HCT116 (cell line): ENCODE measurements at regions of chr2 and their contacts with region 1.

Region 1: GRCh38 chr2:47272031-47272864 is 117.1 kb upstream of the STPG4 start:
- DNase-seq: peak; percentile 26
- ATAC-seq: peak; percentile 88
- H3K4me3 ChIP-seq: peak overlapping the region; percentile 39 to 53
- H3K27ac ChIP-seq: peak overlapping the region; percentile 8; the same call in 1 of the 2 replicates
- H3K4me1 ChIP-seq: peaks cover 8 to 35% of the 10 kb centered on the region in 2 experiments; a peak in 3 of 4 replicates
- H3K27me3 ChIP-seq: no peaks in the 10 kb centered on the region
- CTCF ChIP-seq: peak; percentile 87 to 95 (median 88)
- POLR2A ChIP-seq: no peak
- RAD21 ChIP-seq: peak; percentile 88

Region 2: DNA sequence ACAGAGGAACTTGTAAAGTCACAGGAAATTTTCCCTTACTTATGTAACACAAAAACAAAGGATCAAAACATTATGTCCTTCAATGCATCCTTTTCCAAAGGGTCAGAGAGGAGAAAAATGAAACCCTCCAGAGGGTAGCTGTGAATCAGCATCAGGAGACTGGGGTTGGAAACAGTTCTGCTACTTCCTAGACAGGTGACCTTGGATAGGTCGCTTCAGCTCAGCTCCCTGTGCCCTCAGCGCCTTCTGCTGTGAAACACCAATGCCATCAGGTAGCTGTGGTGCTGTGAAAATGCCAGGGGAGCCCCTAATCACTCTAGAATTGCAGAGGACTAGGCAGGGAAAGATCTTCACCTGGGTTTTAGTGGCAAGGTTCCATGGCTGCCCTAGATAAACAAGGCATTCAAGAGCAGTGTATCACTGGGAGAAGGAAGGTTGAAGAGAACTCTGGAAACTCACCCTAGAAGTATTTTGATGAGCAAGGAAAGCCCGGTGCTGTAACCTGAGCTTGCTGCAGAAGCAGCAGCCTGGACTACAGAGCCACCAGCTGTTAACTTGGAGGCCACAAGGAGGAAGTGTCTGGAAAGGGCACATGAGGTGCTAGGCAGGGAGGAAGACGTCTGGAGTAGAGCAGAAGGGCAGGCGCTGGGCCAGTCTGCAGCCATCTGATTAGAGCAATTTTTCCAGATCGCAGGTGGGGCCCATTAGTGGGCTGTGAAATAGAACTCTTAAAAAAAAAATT is 255.9 kb before region 1 on chr2:
- CTCF ChIA-PET with region 1: no interaction called
- POLR2A ChIA-PET with region 1: no interaction called
- RAD21 ChIA-PET with region 1: no interaction called
- intact Hi-C with region 1: loop called (anchors 5 kb)
- DNase-seq: peak; percentile 60
- ATAC-seq: peak; percentile 92
- H3K4me3 ChIP-seq: peak overlapping the region in 1 of 2 experiments; percentile 7; a peak in 1 of 4 replicates
- H3K27ac ChIP-seq: peak overlapping the region; percentile 66
- H3K4me1 ChIP-seq: peaks cover 23 to 30% of the 10 kb centered on the region in 2 experiments
- H3K27me3 ChIP-seq: no peaks in the 10 kb centered on the region
- CTCF ChIP-seq: peak in 2 of 3 experiments; percentile 19 to 33; a peak in 1 of 6 replicates
- POLR2A ChIP-seq: no peak
- RAD21 ChIP-seq: peak; percentile 73

Region 3: DNA sequence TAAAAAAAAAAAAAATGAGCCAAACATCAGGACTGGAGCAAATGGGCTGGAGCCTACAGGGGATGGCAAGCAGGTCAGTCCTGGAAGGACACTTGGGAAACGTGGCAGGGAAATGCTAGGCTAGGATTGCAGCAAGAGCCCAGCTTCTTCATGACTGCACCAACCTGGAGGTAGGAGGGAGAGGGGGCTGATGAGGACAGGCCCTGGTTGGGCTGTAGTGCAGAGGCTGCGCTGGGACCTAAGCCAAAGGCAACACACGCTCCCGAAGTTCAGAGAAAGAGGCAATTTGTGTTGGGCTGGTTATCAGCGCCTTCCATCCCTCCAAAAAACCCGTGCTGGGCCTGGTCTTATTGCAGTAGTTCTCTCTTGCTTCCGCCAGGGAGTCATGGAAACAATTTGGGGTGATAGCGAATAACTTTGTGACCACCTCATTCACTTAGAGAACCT is 34.9 kb before region 1 on chr2:
- CTCF ChIA-PET with region 1: no interaction called
- POLR2A ChIA-PET with region 1: no interaction called
- RAD21 ChIA-PET with region 1: no interaction called
- intact Hi-C with region 1: no loop called
- DNase-seq: no peak
- ATAC-seq: no peak
- H3K4me3 ChIP-seq: no peak overlapping the region
- H3K27ac ChIP-seq: no peak overlapping the region
- H3K4me1 ChIP-seq: no peaks in the 10 kb centered on the region
- H3K27me3 ChIP-seq: peaks cover 5% of the 10 kb centered on the region; the same call in 1 of the 2 replicates
- CTCF ChIP-seq: no peak
- POLR2A ChIP-seq: no peak
- RAD21 ChIP-seq: no peak